ENCODE measurements at regions of chrX and their contacts with region 1.

Region 1: DNA sequence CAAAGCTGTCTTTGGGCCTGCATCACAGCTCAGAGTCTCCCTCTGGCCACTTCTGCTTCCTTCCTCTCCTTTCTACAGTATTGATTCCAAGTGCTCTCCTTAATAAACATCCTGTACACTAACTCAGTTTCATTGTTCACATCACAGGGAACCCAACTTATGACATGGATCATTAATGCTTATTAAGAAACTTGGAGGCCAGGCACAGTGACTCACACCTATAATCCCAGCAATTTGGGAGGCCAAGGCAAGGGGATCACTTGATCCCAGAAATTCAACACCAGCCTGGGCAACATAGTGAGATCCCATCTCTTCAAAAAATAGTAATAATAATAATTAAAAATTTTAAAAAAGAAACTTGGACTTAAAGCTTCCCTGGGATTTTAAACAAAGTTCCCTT is 89.2 kb upstream of the EFHC2 start:
- DNase-seq: peak; percentile 35
- H3K4me3 ChIP-seq: no peak overlapping the region
- H3K27ac ChIP-seq: no peak overlapping the region
- H3K4me1 ChIP-seq: peaks cover 14% of the 10 kb centered on the region
- H3K27me3 ChIP-seq: no peaks in the 10 kb centered on the region
- CTCF ChIP-seq: no peak

Region 2: GRCh38 chrX:44113337-44113736 is 319.3 kb before region 1 on chrX:
- CTCF ChIA-PET with region 1: no interaction called
- POLR2A ChIA-PET with region 1: no interaction called
- intact Hi-C with region 1: no loop called
- DNase-seq: no peak
- H3K4me3 ChIP-seq: no peak overlapping the region
- H3K27ac ChIP-seq: no peak overlapping the region
- H3K4me1 ChIP-seq: no peaks in the 10 kb centered on the region
- H3K27me3 ChIP-seq: no peaks in the 10 kb centered on the region
- CTCF ChIP-seq: no peak

Region 3: DNA sequence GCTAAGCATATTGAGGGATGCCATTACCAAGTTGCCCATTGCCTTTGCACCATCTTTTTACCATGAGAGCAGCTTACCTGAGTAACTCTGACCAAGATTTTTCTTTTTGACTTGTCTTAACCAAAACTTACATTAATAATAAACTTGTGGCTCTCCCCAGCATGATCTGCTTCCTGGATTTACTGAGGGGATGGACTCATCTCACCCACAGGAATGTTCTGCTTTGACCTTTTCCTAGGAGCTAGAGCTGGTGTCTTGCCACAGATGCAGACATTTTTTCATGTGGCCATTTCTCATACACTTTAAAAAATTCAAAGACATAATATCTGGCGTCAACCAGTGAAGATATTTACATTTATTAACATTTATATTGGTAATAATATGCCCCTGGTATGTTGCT is 10.0 kb before region 1 on chrX:
- CTCF ChIA-PET with region 1: no interaction called
- POLR2A ChIA-PET with region 1: interaction called, 12 read pairs
- intact Hi-C with region 1: no loop called
- DNase-seq: no peak
- H3K4me3 ChIP-seq: no peak overlapping the region
- H3K27ac ChIP-seq: no peak overlapping the region
- H3K4me1 ChIP-seq: no peaks in the 10 kb centered on the region
- H3K27me3 ChIP-seq: no peaks in the 10 kb centered on the region
- CTCF ChIP-seq: no peak